ENCODE measurements at regions of chr3 and their contacts with region 1.

Region 1: DNA sequence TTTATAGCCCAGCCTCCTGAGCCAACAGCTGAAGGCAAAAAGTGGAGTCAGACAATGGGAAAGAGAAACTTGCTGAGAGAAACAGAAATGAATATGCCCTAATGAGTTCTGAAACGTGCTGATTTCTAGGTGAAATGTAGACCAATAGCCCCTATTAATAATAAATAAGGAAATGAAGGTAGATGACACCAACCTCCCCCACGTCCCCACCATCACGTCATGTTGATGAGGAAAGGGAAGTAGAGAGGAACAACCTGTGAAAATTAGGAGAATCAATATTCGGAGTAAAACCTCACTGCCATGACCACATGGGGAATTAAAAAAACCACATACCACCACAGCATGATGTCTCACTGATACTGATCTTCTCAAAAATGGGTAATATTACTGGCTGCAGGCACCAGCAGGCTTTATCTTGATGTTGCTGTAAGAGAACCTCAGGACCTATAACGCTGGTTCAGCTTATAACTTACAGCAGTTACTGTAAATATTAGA is 64.0 kb downstream of the KAT2B start:
- DNase-seq: peak; percentile 23 to 79
- ATAC-seq: peak; percentile 76 to 85 (median 78)
- H3K4me3 ChIP-seq: peak overlapping the region; percentile 10
- H3K4me3 Mint-ChIP-seq: peak overlapping the region; percentile 78
- H3K27ac ChIP-seq: peak overlapping the region; percentile 69
- H3K27ac Mint-ChIP-seq: peak overlapping the region; percentile 90
- H3K4me1 ChIP-seq: peaks cover 49% of the 10 kb centered on the region
- H3K4me1 Mint-ChIP-seq: peaks cover 69 to 75% of the 10 kb centered on the region in 2 donors
- H3K27me3 ChIP-seq: no peaks in the 10 kb centered on the region
- H3K27me3 Mint-ChIP-seq: no peaks in the 10 kb centered on the region
- CTCF ChIP-seq: no peak

Region 2: DNA sequence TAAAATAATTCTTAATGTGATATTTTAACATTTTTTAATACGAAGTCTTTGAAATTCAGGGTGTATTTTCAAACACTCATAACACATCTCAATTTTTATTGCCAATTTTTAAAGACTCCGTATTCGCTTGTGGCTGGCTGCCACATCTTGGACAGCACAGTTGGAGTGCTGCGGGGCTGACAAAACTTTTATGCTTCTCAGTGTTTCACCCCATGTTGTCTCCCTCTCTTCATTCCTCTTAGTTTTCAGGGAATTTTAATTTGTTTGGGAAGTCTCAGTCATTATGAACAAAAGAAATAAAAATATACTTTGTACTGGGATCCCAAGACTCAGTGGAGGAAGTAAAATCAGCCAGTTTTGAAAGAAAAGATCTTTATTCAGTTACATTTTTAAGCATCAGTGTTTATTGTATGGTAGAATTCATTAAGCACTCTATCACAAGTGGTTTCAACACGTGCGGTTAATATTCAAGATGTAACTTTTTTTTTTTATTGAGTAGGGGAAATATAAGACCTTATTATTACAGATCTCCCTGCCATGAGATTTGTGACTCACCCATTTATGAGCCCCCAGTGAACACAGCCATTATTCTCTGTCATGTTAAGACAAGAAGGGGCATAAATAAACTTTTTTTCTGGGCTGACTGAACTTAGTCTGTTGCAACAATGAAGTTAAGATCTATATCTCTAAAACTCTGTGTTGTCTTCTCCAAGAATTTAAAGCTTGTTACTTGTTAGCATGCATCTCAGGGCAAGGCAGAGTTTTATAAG is 37.2 kb before region 1 on chr3:
- intact Hi-C with region 1: loop called (anchors 5 kb)
- DNase-seq: no peak
- ATAC-seq: peak; percentile 61 to 78 (median 73)
- H3K4me3 ChIP-seq: no peak overlapping the region
- H3K4me3 Mint-ChIP-seq: peak overlapping the region; percentile 71
- H3K27ac ChIP-seq: no peak overlapping the region
- H3K27ac Mint-ChIP-seq: peak overlapping the region; percentile 73 to 87
- H3K4me1 ChIP-seq: peaks cover 31% of the 10 kb centered on the region
- H3K4me1 Mint-ChIP-seq: peaks cover 81 to 85% of the 10 kb centered on the region in 2 donors
- H3K27me3 ChIP-seq: no peaks in the 10 kb centered on the region
- H3K27me3 Mint-ChIP-seq: no peaks in the 10 kb centered on the region
- CTCF ChIP-seq: no peak

Region 3: DNA sequence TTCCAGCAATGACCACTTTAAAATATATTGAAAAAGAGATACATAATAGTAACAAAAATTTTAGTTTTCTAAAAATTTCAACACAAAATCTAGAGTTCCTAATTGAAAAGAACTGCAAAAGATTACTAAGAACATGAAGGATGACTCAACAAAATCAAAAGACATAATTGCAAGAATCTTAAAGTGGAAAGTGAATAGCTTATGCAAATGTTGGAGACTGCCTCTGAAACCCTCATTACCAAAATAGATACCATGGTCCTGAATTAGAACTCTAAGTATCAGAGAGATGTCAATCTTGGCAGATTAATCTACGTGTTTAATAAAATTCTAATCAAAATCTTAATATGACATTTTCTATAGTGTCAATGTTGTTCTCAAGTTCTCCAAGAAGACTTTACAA is 142.4 kb after region 1 on chr3:
- intact Hi-C with region 1: no loop called
- DNase-seq: no peak
- ATAC-seq: no peak
- H3K4me3 ChIP-seq: no peak overlapping the region
- H3K4me3 Mint-ChIP-seq: no peak overlapping the region
- H3K27ac ChIP-seq: no peak overlapping the region
- H3K27ac Mint-ChIP-seq: no peak overlapping the region
- H3K4me1 ChIP-seq: no peaks in the 10 kb centered on the region
- H3K4me1 Mint-ChIP-seq: no peaks in the 10 kb centered on the region
- H3K27me3 ChIP-seq: no peaks in the 10 kb centered on the region
- H3K27me3 Mint-ChIP-seq: peaks cover 5 to 12% of the 10 kb centered on the region in 2 donors
- CTCF ChIP-seq: no peak

Region 4: GRCh38 chr3:21028412-21028811 is 924.2 kb after region 1 on chr3:
- intact Hi-C with region 1: no loop called
- DNase-seq: no peak
- ATAC-seq: no peak
- H3K4me3 ChIP-seq: no peak overlapping the region
- H3K4me3 Mint-ChIP-seq: no peak overlapping the region
- H3K27ac ChIP-seq: no peak overlapping the region
- H3K27ac Mint-ChIP-seq: no peak overlapping the region
- H3K4me1 ChIP-seq: no peaks in the 10 kb centered on the region
- H3K4me1 Mint-ChIP-seq: no peaks in the 10 kb centered on the region
- H3K27me3 ChIP-seq: no peaks in the 10 kb centered on the region
- H3K27me3 Mint-ChIP-seq: no peaks in the 10 kb centered on the region
- CTCF ChIP-seq: no peak